HCT116 (cell line): ENCODE measurements at regions of chr20 and their contacts with region 1.

Region 1: DNA sequence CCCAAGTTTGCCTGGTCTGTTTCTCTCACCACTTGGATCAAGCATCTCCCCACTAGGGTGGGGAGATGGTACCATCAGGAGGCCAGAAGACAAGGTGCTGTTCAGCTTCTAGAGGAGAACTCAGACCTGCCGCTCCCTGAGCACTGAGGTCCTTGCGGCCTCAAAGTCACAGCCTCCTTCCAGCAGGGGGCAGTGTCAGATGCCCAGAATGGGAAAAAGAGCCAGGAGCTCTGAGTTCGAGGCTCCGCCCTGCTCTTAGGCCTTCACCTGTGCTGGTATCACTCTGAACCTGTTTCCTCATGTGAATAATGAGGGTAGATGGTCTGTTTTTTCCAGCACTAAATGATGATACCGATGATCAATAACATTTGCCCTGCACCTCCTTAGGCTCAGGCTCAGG is 68.7 kb downstream of the TOX2 start:
- DNase-seq: no peak
- ATAC-seq: peak; percentile 80
- H3K4me3 ChIP-seq: no peak overlapping the region
- H3K27ac ChIP-seq: no peak overlapping the region
- H3K4me1 ChIP-seq: peaks cover 0 to 19% of the 10 kb centered on the region in 2 experiments; a peak in 2 of 4 replicates
- H3K27me3 ChIP-seq: no peaks in the 10 kb centered on the region
- CTCF ChIP-seq: peak in 2 of 3 experiments; percentile 70 to 85; a peak in 4 of 6 replicates
- POLR2A ChIP-seq: no peak
- RAD21 ChIP-seq: peak; percentile 43; the same call in 1 of the 2 replicates

Region 2: GRCh38 chr20:43996240-43996930 is 13.0 kb after region 1 on chr20:
- CTCF ChIA-PET with region 1: interaction called, 11 read pairs
- POLR2A ChIA-PET with region 1: interaction called, 4 read pairs
- RAD21 ChIA-PET with region 1: no interaction called
- intact Hi-C with region 1: no loop called
- DNase-seq: no peak
- ATAC-seq: no peak
- H3K4me3 ChIP-seq: no peak overlapping the region
- H3K27ac ChIP-seq: no peak overlapping the region
- H3K4me1 ChIP-seq: peaks cover 5 to 17% of the 10 kb centered on the region in 2 experiments
- H3K27me3 ChIP-seq: no peaks in the 10 kb centered on the region
- CTCF ChIP-seq: no peak
- POLR2A ChIP-seq: no peak
- RAD21 ChIP-seq: no peak

Region 3: GRCh38 chr20:44018259-44018941 is 35.0 kb after region 1 on chr20:
- CTCF ChIA-PET with region 1: interaction called, 10 read pairs
- POLR2A ChIA-PET with region 1: no interaction called
- RAD21 ChIA-PET with region 1: no interaction called
- intact Hi-C with region 1: no loop called
- DNase-seq: peak; percentile 85
- ATAC-seq: peak; percentile 92
- H3K4me3 ChIP-seq: peak overlapping the region; percentile 4 to 48; a peak in 2 of 4 replicates
- H3K27ac ChIP-seq: peak overlapping the region; percentile 79
- H3K4me1 ChIP-seq: peaks cover 34 to 39% of the 10 kb centered on the region in 2 experiments
- H3K27me3 ChIP-seq: no peaks in the 10 kb centered on the region
- CTCF ChIP-seq: no peak
- POLR2A ChIP-seq: no peak
- RAD21 ChIP-seq: 0 out of 2 replicates have a peak, but pooled peaks have one; percentile 26